ENCODE measurements at regions of chr17 and their contacts with region 1.

Region 1: DNA sequence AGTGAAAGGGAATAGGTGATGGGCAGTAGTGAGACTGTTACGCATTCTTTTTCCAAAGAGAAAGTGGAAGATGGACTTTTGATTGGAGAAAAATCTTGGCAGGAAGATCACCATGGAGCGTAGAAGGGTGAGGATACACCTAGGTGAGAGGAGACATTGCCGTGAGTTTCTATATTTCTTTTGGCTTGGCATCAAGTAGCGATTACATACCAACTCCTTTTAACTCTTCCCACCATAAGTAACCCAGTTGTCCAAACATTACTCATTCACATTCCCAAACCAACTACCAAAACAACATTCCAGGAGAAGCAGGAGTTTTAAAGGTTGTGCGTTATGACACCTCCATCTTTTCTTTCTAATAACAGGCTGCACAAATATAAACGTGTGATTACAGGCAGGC is 10.7 kb upstream of the KRT28 start:
- DNase-seq: no peak
- ATAC-seq: no peak
- H3K4me3 ChIP-seq: no peak overlapping the region
- H3K4me3 Mint-ChIP-seq: no peak overlapping the region
- H3K27ac ChIP-seq: no peak overlapping the region
- H3K27ac Mint-ChIP-seq: no peak overlapping the region
- H3K4me1 ChIP-seq: no peaks in the 10 kb centered on the region
- H3K4me1 Mint-ChIP-seq: no peaks in the 10 kb centered on the region
- H3K27me3 ChIP-seq: peaks cover 48% of the 10 kb centered on the region
- H3K27me3 Mint-ChIP-seq: peaks cover 63 to 91% of the 10 kb centered on the region in 2 donors
- CTCF ChIP-seq: no peak

Region 2: GRCh38 chr17:40846515-40847155 is 36.1 kb after region 1 on chr17:
- intact Hi-C with region 1: loop called (anchors 1 kb)
- DNase-seq: no peak
- ATAC-seq: no peak
- H3K4me3 ChIP-seq: no peak overlapping the region
- H3K4me3 Mint-ChIP-seq: no peak overlapping the region
- H3K27ac ChIP-seq: no peak overlapping the region
- H3K27ac Mint-ChIP-seq: no peak overlapping the region
- H3K4me1 ChIP-seq: no peaks in the 10 kb centered on the region
- H3K4me1 Mint-ChIP-seq: no peaks in the 10 kb centered on the region
- H3K27me3 ChIP-seq: peaks cover 5% of the 10 kb centered on the region
- H3K27me3 Mint-ChIP-seq: peaks cover 37 to 58% of the 10 kb centered on the region in 2 donors
- CTCF ChIP-seq: no peak